GM12878 (cell line): ENCODE measurements at regions of chr5 and their contacts with region 1.

Region 1: GRCh38 chr5:108681079-108681921 is 66.4 kb upstream of the FER start:
- DNase-seq: peak; percentile 67
- ATAC-seq: peak; percentile 98
- H3K4me3 ChIP-seq: peak overlapping the region; percentile 37; the same call in 1 of the 2 replicates
- H3K27ac ChIP-seq: peak overlapping the region; percentile 66
- H3K4me1 ChIP-seq: peaks cover 3% of the 10 kb centered on the region; the same call in 1 of the 2 replicates
- H3K27me3 ChIP-seq: no peaks in the 10 kb centered on the region
- CTCF ChIP-seq: peak; percentile 81 to 89 (median 86)
- EP300 ChIP-seq: no peak
- POLR2A ChIP-seq: no peak
- RAD21 ChIP-seq: peak; percentile 100

Region 2: GRCh38 chr5:108164574-108164973 is 516.7 kb before region 1 on chr5:
- CTCF ChIA-PET with region 1: no interaction called
- POLR2A ChIA-PET with region 1: no interaction called
- RAD21 ChIA-PET with region 1: no interaction called
- SMC1A ChIA-PET with region 1: no interaction called
- in situ Hi-C with region 1: no loop called
- intact Hi-C with region 1: no loop called
- DNase-seq: no peak
- ATAC-seq: no peak
- H3K4me3 ChIP-seq: no peak overlapping the region
- H3K27ac ChIP-seq: no peak overlapping the region
- H3K4me1 ChIP-seq: no peaks in the 10 kb centered on the region
- H3K27me3 ChIP-seq: no peaks in the 10 kb centered on the region
- CTCF ChIP-seq: no peak
- EP300 ChIP-seq: no peak
- POLR2A ChIP-seq: no peak
- RAD21 ChIP-seq: no peak

Region 3: DNA sequence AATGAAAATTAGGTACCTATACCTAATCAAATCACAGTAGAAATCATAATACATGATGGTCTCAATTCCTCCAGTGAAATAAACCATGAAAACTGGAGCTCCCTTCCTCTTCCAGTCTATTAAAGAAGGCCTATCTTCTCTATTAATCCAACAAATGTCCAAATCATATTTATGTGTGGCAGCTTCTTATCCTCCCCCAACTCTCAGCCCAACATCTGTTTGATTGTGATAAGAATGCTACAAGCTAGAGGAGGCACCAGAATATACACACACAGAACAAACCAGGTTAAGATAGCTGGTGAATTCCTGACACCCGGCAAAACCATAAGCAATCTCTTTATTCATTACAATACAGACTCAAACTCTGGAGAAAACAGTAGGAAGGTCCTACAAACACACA is 410.2 kb before region 1 on chr5:
- CTCF ChIA-PET with region 1: no interaction called
- POLR2A ChIA-PET with region 1: no interaction called
- RAD21 ChIA-PET with region 1: no interaction called
- SMC1A ChIA-PET with region 1: no interaction called
- in situ Hi-C with region 1: no loop called
- intact Hi-C with region 1: no loop called
- DNase-seq: no peak
- ATAC-seq: no peak
- H3K4me3 ChIP-seq: no peak overlapping the region
- H3K27ac ChIP-seq: no peak overlapping the region
- H3K4me1 ChIP-seq: no peaks in the 10 kb centered on the region
- H3K27me3 ChIP-seq: no peaks in the 10 kb centered on the region
- CTCF ChIP-seq: no peak
- EP300 ChIP-seq: no peak
- POLR2A ChIP-seq: no peak
- RAD21 ChIP-seq: no peak

Region 4: GRCh38 chr5:108521841-108522506 is 159.3 kb before region 1 on chr5:
- CTCF ChIA-PET with region 1: interaction called, 4 read pairs
- POLR2A ChIA-PET with region 1: no interaction called
- RAD21 ChIA-PET with region 1: interaction called, 3 read pairs
- SMC1A ChIA-PET with region 1: no interaction called
- in situ Hi-C with region 1: no loop called
- intact Hi-C with region 1: loop called (anchors 5 kb)
- DNase-seq: peak; percentile 57
- ATAC-seq: peak; percentile 88
- H3K4me3 ChIP-seq: no peak overlapping the region
- H3K27ac ChIP-seq: peak overlapping the region; percentile 54
- H3K4me1 ChIP-seq: peaks cover 14% of the 10 kb centered on the region
- H3K27me3 ChIP-seq: no peaks in the 10 kb centered on the region
- CTCF ChIP-seq: peak; percentile 54 to 70 (median 69); a peak in 5 of 6 replicates
- EP300 ChIP-seq: no peak
- POLR2A ChIP-seq: no peak
- RAD21 ChIP-seq: peak; percentile 83

Region 5: DNA sequence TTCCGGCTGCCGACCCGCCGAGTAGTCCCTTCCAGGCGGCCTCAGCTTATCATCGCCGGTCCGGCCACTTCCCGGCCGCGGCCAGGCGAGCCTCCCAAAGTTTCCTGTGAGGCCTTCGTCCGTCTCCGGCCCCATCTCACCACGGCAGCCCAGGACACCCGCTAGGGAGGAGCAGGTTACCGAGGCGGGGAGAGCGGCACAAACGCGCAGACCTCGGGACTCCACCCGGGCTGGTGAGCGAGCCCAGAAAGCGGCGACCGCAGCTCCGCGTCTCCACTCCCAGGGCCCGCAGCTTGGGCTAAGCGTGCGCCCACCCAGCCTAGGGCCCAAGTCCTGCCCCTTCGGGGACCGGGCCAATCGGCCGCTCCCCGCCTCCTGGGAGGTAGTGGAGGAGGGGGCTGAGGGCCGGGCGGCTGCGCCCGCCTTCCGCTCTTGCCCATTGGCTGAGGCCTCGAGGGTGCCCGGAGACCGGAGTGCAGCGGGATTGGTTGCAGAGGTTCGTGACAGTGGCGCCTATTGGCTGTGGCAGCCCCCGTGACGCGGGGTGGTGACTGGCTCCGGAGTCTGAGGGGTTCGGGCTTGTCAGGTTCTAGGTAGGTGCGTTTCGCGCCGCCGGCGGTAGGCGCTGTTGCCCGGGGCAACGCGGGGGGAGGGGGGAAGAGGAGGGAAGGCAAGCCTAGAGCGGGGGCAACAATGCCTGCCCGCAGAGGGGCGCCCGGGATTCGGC is 67.3 kb after region 1 on chr5:
- CTCF ChIA-PET with region 1: interaction called, 5 read pairs
- POLR2A ChIA-PET with region 1: interaction called, 5 read pairs
- RAD21 ChIA-PET with region 1: interaction called, 4 read pairs
- SMC1A ChIA-PET with region 1: interaction called, 4 read pairs
- in situ Hi-C with region 1: no loop called
- intact Hi-C with region 1: loop called (anchors 2 kb)
- DNase-seq: peak; percentile 97
- ATAC-seq: peak; percentile 94
- H3K4me3 ChIP-seq: peak overlapping the region; percentile 93
- H3K27ac ChIP-seq: peak overlapping the region; percentile 90
- H3K4me1 ChIP-seq: no peaks in the 10 kb centered on the region
- H3K27me3 ChIP-seq: no peaks in the 10 kb centered on the region
- CTCF ChIP-seq: peak in 1 of 3 experiments; percentile 14; a peak in 1 of 6 replicates
- EP300 ChIP-seq: no peak
- POLR2A ChIP-seq: peak; percentile 99
- RAD21 ChIP-seq: peak; percentile 31; the same call in 1 of the 2 replicates

Region 6: DNA sequence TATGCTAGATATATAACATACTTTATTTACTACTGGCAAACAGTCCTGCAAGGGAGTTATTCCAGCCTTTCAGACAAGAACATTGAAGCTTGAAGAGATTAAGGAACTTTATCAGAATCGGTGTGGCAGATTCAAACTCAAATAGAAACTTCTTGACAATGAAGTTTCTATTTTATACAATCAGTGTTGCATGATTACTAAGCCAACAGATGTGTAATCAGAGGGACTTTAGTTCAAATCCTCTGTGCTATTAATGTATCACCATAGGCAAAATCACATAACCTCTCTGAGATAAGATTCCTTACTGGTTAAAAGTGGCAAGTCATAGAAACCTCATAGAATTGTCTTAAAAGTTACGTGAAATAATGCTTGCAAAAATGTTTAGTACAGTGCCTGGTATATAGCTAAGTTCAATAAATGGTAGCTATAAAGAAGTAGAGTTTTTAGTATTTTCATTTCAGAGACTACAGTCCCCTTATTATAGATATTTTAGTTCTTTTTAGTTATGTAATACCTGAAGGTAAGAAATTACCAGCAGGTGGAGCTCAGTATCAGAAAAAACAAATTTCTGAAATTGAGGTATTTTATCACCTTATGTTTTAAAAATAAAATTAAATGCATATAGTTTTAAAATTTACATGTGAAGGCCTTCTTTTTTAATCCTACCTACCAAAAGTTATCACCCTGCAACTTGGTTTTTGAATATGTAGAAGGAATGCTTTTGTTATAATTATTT is 238.5 kb after region 1 on chr5:
- CTCF ChIA-PET with region 1: interaction called, 15 read pairs
- POLR2A ChIA-PET with region 1: no interaction called
- RAD21 ChIA-PET with region 1: interaction called, 4 read pairs
- SMC1A ChIA-PET with region 1: interaction called, 17 read pairs
- in situ Hi-C with region 1: no loop called
- intact Hi-C with region 1: loop called (anchors 5 kb)
- DNase-seq: no peak
- ATAC-seq: peak; percentile 70
- H3K4me3 ChIP-seq: no peak overlapping the region
- H3K27ac ChIP-seq: no peak overlapping the region
- H3K4me1 ChIP-seq: no peaks in the 10 kb centered on the region
- H3K27me3 ChIP-seq: no peaks in the 10 kb centered on the region
- CTCF ChIP-seq: peak in 1 of 3 experiments; percentile 14; a peak in 1 of 6 replicates
- EP300 ChIP-seq: no peak
- POLR2A ChIP-seq: no peak
- RAD21 ChIP-seq: peak; percentile 33

Region 7: GRCh38 chr5:109439590-109439989 is 758.3 kb after region 1 on chr5:
- CTCF ChIA-PET with region 1: interaction called, 11 read pairs
- POLR2A ChIA-PET with region 1: no interaction called
- RAD21 ChIA-PET with region 1: interaction called, 3 read pairs
- SMC1A ChIA-PET with region 1: interaction called, 4 read pairs
- in situ Hi-C with region 1: no loop called
- intact Hi-C with region 1: loop called (anchors 1 kb)
- DNase-seq: no peak
- ATAC-seq: peak; percentile 68
- H3K4me3 ChIP-seq: no peak overlapping the region
- H3K27ac ChIP-seq: no peak overlapping the region
- H3K4me1 ChIP-seq: no peaks in the 10 kb centered on the region
- H3K27me3 ChIP-seq: no peaks in the 10 kb centered on the region
- CTCF ChIP-seq: no peak
- EP300 ChIP-seq: no peak
- POLR2A ChIP-seq: no peak
- RAD21 ChIP-seq: no peak

Region 8: DNA sequence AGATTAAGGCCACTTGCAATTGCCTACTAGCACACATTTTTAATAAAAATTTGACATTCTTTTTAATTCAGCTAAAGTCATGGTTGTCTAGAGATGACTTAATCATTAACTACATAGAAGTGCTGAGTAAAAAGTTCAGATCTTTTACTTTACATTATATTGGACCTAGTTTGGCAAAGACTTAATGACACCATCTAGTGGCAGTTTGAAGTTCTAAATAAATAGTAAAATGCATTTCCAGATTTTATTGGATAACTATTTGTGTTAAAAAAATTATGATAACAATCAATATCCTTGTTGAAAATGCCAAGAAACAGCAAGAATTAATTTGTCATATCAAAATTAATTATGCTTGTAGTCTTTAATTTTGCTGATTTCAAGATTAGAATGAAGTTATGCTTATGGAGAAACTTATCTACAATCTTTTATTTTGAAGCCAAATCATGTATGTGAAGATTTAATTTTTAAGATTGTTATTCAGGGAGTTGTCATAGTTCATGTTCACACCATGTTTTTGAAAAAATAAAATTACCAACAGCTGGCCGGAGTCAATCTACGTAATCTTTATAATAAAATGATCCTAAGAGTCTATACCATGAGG is 798.1 kb after region 1 on chr5:
- CTCF ChIA-PET with region 1: interaction called, 4 read pairs
- POLR2A ChIA-PET with region 1: no interaction called
- RAD21 ChIA-PET with region 1: no interaction called
- SMC1A ChIA-PET with region 1: no interaction called
- in situ Hi-C with region 1: no loop called
- intact Hi-C with region 1: loop called (anchors 1 kb)
- DNase-seq: no peak
- ATAC-seq: peak; percentile 60; the same call in 2 of the 3 replicates
- H3K4me3 ChIP-seq: no peak overlapping the region
- H3K27ac ChIP-seq: no peak overlapping the region
- H3K4me1 ChIP-seq: no peaks in the 10 kb centered on the region
- H3K27me3 ChIP-seq: 0 out of 4 replicates have a peak, but pooled peaks cover 0 to 4% of the 10 kb centered on the region in 2 experiments
- CTCF ChIP-seq: peak; percentile 29 to 54 (median 34); a peak in 3 of 6 replicates
- EP300 ChIP-seq: no peak
- POLR2A ChIP-seq: no peak
- RAD21 ChIP-seq: peak; percentile 52